ENCODE measurements at regions of chr20 and their contacts with region 1.

Region 1: DNA sequence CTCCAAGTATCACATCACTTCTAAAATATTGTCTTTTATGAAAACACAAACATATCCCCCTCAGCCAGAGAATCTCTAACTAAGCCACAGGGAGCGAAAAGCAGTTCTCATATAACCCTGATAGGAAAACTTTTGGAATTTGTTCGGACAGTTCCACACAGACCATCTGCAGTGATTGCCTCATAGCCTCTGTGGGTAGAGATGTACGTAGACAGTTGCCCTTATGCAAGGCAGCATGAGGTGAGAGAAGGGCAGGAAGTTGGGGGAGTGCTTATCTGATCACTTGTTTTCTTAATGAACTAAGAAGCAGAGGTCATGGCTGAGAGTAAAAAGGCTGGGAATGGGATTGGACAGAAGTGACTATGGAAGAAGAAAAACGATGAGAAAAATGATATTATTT is 39.6 kb downstream of the SLC23A2 start:
- DNase-seq: peak in 7 of 9 experiments; percentile 7 to 68 (median 20)
- ATAC-seq: peak; percentile 85
- H3K4me3 ChIP-seq: no peak overlapping the region
- H3K4me3 Mint-ChIP-seq: peak overlapping the region; percentile 43
- H3K27ac ChIP-seq: peak overlapping the region; percentile 31 to 64
- H3K27ac Mint-ChIP-seq: peak overlapping the region; percentile 92
- H3K4me1 ChIP-seq: peaks cover 13% of the 10 kb centered on the region
- H3K4me1 Mint-ChIP-seq: peaks cover 23% of the 10 kb centered on the region
- H3K27me3 ChIP-seq: no peaks in the 10 kb centered on the region
- H3K27me3 Mint-ChIP-seq: no peaks in the 10 kb centered on the region
- CTCF ChIP-seq: no peak

Region 2: GRCh38 chr20:5001174-5002076 is 39.7 kb after region 1 on chr20 and contains the start of gene SLC23A2:
- CTCF ChIA-PET with region 1: no interaction called
- POLR2A ChIA-PET with region 1: interaction called, 3 read pairs
- intact Hi-C with region 1: loop called in 1 of 2 experiments (anchors 5 kb)
- DNase-seq: peak; percentile 11 to 81 (median 56)
- ATAC-seq: peak; percentile 88
- H3K4me3 ChIP-seq: peak within 1 kb of the TSS; percentile 72
- H3K4me3 Mint-ChIP-seq: peak within 1 kb of the TSS; percentile 97
- H3K27ac ChIP-seq: peak within 1 kb of the TSS; percentile 43 to 63
- H3K27ac Mint-ChIP-seq: peak within 1 kb of the TSS; percentile 95
- H3K4me1 ChIP-seq: peaks cover 15% of the 10 kb centered on the region
- H3K4me1 Mint-ChIP-seq: peaks cover 37% of the 10 kb centered on the region
- H3K27me3 ChIP-seq: no peaks in the 10 kb centered on the region
- H3K27me3 Mint-ChIP-seq: no peaks in the 10 kb centered on the region
- CTCF ChIP-seq: no peak
- total RNA-seq, gene SLC23A2: 21.1 to 22.0 TPM

Region 3: GRCh38 chr20:5020760-5021159 is 59.0 kb after region 1 on chr20:
- CTCF ChIA-PET with region 1: no interaction called
- POLR2A ChIA-PET with region 1: no interaction called
- intact Hi-C with region 1: no loop called
- DNase-seq: no peak
- ATAC-seq: no peak
- H3K4me3 ChIP-seq: no peak overlapping the region
- H3K4me3 Mint-ChIP-seq: no peak overlapping the region
- H3K27ac ChIP-seq: no peak overlapping the region
- H3K27ac Mint-ChIP-seq: no peak overlapping the region
- H3K4me1 ChIP-seq: no peaks in the 10 kb centered on the region
- H3K4me1 Mint-ChIP-seq: no peaks in the 10 kb centered on the region
- H3K27me3 ChIP-seq: no peaks in the 10 kb centered on the region
- H3K27me3 Mint-ChIP-seq: no peaks in the 10 kb centered on the region
- CTCF ChIP-seq: no peak

Region 4: GRCh38 chr20:5090191-5090590 is 128.4 kb after region 1 on chr20:
- CTCF ChIA-PET with region 1: no interaction called
- POLR2A ChIA-PET with region 1: no interaction called
- intact Hi-C with region 1: no loop called
- DNase-seq: peak in 2 of 9 experiments; percentile 31 to 60
- ATAC-seq: no peak
- H3K4me3 ChIP-seq: no peak overlapping the region
- H3K4me3 Mint-ChIP-seq: no peak overlapping the region
- H3K27ac ChIP-seq: peak overlapping the region in 1 of 2 experiments; percentile 36
- H3K27ac Mint-ChIP-seq: peak overlapping the region; percentile 80
- H3K4me1 ChIP-seq: peaks cover 12% of the 10 kb centered on the region
- H3K4me1 Mint-ChIP-seq: peaks cover 9% of the 10 kb centered on the region
- H3K27me3 ChIP-seq: no peaks in the 10 kb centered on the region
- H3K27me3 Mint-ChIP-seq: no peaks in the 10 kb centered on the region
- CTCF ChIP-seq: no peak